HepG2 (cell line): ENCODE measurements at regions of chr10 and their contacts with region 1.

Region 1: GRCh38 chr10:50624866-50625692 is 1.3 kb upstream of the SGMS1 start:
- DNase-seq: peak; percentile 81
- ATAC-seq: peak; percentile 78
- H3K4me3 ChIP-seq: peak overlapping the region; percentile 64 to 88 (median 86)
- H3K27ac ChIP-seq: peak overlapping the region; percentile 99
- H3K4me1 ChIP-seq: peaks cover 26% of the 10 kb centered on the region
- H3K27me3 ChIP-seq: no peaks in the 10 kb centered on the region; a peak in 1 of 5 replicates
- CTCF ChIP-seq: peak; percentile 62
- EP300 ChIP-seq: no peak
- POLR2A ChIP-seq: peak; percentile 77 to 82
- RAD21 ChIP-seq: peak; percentile 44; the same call in 1 of the 2 replicates

Region 2: GRCh38 chr10:50417886-50418830 is 206.9 kb before region 1 on chr10:
- CTCF ChIA-PET with region 1: no interaction called
- POLR2A ChIA-PET with region 1: interaction called, 5 read pairs
- in situ Hi-C with region 1: no loop called
- intact Hi-C with region 1: loop called (anchors 10 kb)
- DNase-seq: peak; percentile 31
- ATAC-seq: peak; percentile 91
- H3K4me3 ChIP-seq: peak overlapping the region; percentile 69 to 88 (median 76)
- H3K27ac ChIP-seq: peak overlapping the region; percentile 46
- H3K4me1 ChIP-seq: peaks cover 52% of the 10 kb centered on the region
- H3K27me3 ChIP-seq: no peaks in the 10 kb centered on the region
- CTCF ChIP-seq: peak; percentile 30; the same call in 1 of the 2 replicates
- EP300 ChIP-seq: no peak
- POLR2A ChIP-seq: no peak
- RAD21 ChIP-seq: peak; percentile 42

Region 3: DNA sequence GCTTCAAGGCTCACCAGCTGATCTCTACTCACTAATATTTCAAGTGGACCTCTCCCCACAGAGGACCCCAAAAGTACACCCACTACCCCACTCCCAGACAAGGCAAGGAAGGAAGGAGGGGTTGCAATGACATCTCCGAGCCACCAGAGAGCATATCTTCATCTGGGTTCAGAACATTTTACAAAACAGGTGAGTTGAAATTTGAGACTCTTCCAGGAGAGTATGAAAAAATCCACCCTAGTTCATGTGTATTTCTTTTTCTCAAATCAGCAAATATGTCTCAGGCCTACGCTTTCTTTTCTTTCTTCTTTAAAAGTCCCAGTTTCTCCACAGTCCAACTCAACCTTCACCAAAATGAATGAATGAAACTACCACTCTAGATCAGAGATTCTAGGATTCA is 63.3 kb before region 1 on chr10:
- CTCF ChIA-PET with region 1: interaction called, 8 read pairs
- POLR2A ChIA-PET with region 1: interaction called, 12 read pairs
- in situ Hi-C with region 1: loop called (anchors 5 kb)
- intact Hi-C with region 1: loop called (anchors 1 kb)
- DNase-seq: no peak
- ATAC-seq: peak; percentile 39; the same call in 2 of the 3 replicates
- H3K4me3 ChIP-seq: no peak overlapping the region
- H3K27ac ChIP-seq: no peak overlapping the region
- H3K4me1 ChIP-seq: peaks cover 50% of the 10 kb centered on the region
- H3K27me3 ChIP-seq: no peaks in the 10 kb centered on the region
- CTCF ChIP-seq: peak; percentile 72
- EP300 ChIP-seq: no peak
- POLR2A ChIP-seq: no peak
- RAD21 ChIP-seq: peak; percentile 63

Region 4: DNA sequence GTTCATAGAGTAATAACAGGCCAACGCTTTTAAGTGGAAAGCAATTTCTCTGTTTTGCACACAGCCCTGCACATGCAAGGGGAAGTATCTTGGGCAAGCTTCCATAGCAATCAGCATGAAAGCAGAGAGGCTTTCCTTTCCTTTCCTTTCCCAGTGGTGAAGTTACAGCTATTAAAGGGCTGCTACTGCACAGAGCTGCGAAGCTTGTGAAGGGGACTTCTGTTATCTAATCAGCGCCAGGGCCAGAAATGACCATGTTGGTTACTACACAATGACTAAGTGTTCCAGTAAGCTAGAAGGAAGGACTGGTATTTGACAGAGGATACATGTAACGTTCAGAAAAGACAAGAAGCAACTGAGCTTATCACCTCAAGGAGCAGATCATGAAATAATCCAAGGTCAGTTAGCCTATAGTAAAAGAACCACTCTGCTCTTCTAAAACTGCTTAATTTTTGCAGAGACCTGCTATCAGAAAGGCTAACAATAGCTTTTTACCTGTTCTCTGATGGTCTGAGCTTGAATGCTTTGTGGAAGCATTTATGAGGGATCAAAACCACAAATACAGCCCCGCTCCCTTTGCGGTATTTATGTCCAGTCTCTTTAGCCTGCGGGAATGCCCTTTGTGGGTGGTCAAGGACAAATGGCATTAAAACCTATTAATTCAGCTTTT is 47.3 kb before region 1 on chr10:
- CTCF ChIA-PET with region 1: no interaction called
- POLR2A ChIA-PET with region 1: interaction called, 34 read pairs
- in situ Hi-C with region 1: no loop called
- intact Hi-C with region 1: no loop called
- DNase-seq: no peak
- ATAC-seq: no peak
- H3K4me3 ChIP-seq: no peak overlapping the region
- H3K27ac ChIP-seq: no peak overlapping the region
- H3K4me1 ChIP-seq: peaks cover 37% of the 10 kb centered on the region
- H3K27me3 ChIP-seq: no peaks in the 10 kb centered on the region
- CTCF ChIP-seq: no peak
- EP300 ChIP-seq: no peak
- POLR2A ChIP-seq: no peak
- RAD21 ChIP-seq: no peak

Region 5: DNA sequence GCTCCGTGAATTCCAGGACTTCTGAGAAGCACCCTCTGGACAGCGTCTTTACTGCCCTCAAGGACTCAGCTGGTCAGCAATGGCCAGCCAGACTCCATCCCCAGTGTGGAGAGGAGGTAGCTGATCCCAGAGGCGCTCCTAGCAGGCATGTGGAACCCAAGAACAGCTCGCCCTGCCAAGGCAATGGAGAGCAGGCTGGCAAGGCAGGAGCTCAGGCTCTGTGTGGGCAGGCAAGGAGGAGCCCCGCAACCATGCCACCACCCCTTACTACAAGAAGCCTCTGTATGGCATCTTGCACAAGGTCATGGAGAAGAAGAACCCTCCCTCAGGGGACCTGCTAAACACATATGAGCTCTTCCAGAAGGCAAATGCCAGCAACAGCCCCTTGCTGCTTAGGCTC is 33.1 kb after region 1 on chr10:
- CTCF ChIA-PET with region 1: no interaction called
- POLR2A ChIA-PET with region 1: interaction called, 13 read pairs
- in situ Hi-C with region 1: no loop called
- intact Hi-C with region 1: no loop called
- DNase-seq: no peak
- ATAC-seq: no peak
- H3K4me3 ChIP-seq: no peak overlapping the region
- H3K27ac ChIP-seq: no peak overlapping the region
- H3K4me1 ChIP-seq: peaks cover 12% of the 10 kb centered on the region
- H3K27me3 ChIP-seq: peaks cover 0 to 6% of the 10 kb centered on the region in 2 experiments; a peak in 1 of 5 replicates
- CTCF ChIP-seq: no peak
- EP300 ChIP-seq: no peak
- POLR2A ChIP-seq: no peak
- RAD21 ChIP-seq: no peak